WTC11 (cell line): ENCODE measurements at regions of chr9 and their contacts with region 1.

Region 1: DNA sequence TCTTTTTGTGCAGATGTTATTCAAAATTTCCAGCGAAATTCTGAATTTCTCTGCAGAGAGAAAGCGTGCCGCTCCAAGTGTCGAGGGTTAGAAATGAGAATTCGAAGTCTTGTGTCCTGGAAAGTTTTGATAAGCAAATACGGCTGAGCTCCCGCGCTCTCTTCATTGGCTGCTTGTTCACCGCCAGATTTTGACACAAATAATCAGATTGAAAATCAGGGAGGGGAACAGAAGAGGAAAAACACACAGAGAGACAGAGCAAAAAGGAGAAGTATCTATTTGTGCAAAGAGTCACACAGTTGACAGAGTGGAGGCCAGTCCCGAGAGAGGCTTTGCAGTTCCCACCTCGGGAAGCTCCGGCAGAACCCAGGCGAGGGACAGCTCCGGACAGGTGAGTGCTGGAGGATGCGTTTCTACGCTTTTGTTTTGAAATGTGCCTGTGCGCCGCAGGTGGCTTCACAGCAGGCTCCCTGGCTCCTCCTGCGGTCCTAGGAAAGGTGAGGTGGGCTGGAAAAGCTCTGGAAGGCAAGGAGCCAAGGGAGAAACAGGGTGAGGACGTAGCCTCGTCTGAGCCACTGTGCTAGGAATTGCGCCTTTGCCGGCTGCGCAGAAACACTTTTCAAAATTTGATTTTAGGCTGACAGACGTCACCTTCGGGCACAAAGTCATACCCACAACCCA is at the start of gene GFI1B:
- DNase-seq: peak; percentile 57
- ATAC-seq: peak; percentile 48
- H3K4me3 Mint-ChIP-seq: peak within 1 kb of the TSS; percentile 51
- H3K27ac Mint-ChIP-seq: no peak within 1 kb of the TSS
- H3K4me1 Mint-ChIP-seq: peaks cover 19% of the 10 kb centered on the region
- H3K27me3 Mint-ChIP-seq: peaks cover 48% of the 10 kb centered on the region
- CTCF ChIP-seq: no peak
- total RNA-seq, gene GFI1B: 0.41 to 0.78 TPM (median 0.77 TPM) in 3 replicates

Region 2: DNA sequence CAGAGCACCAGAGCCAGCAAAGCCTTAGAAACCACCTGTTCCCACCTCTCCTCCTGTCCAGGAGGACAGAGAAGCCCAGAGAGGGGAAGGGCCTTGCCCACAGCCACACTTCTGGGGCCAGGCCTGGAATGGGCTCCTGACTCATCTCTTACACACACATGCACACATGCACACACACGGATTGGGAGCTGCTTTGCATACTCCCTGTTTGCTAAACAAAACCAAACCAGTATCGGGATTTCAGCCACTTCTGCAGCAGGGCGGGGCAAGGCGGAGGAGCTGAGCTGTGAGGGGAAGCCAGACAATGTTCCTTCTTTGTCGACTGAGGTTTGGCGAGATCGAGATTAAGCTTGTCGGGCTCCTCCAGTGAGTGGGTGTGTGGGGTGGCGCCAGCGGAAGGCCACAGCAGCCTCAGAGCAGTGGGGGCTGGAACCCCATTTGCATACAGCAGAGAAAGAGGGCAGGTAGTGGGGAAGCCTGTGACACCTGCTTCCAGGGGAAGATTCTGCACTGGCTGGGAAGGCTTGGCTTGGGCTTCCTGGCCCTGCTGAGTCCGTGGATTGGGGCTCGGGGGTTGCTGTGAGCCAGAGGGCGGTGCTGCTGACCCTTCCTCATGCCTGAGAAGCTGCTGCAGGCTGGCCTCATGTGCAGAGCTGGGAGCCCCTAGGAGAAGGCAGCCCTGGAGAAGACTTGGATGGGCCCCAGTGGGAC is 16.0 kb after region 1 on chr9:
- CTCF ChIA-PET with region 1: interaction called, 23 read pairs
- POLR2A ChIA-PET with region 1: no interaction called
- DNase-seq: no peak
- ATAC-seq: peak; percentile 31
- H3K4me3 Mint-ChIP-seq: no peak overlapping the region
- H3K27ac Mint-ChIP-seq: no peak overlapping the region
- H3K4me1 Mint-ChIP-seq: peaks cover 37% of the 10 kb centered on the region
- H3K27me3 Mint-ChIP-seq: peaks cover 4% of the 10 kb centered on the region; the same call in 1 of the 2 replicates
- CTCF ChIP-seq: no peak

Region 3: GRCh38 chr9:133004091-133004998 is 25.8 kb after region 1 on chr9:
- CTCF ChIA-PET with region 1: interaction called, 37 read pairs
- POLR2A ChIA-PET with region 1: interaction called, 3 read pairs
- DNase-seq: peak; percentile 6
- ATAC-seq: no peak
- H3K4me3 Mint-ChIP-seq: no peak overlapping the region
- H3K27ac Mint-ChIP-seq: no peak overlapping the region
- H3K4me1 Mint-ChIP-seq: peaks cover 38% of the 10 kb centered on the region
- H3K27me3 Mint-ChIP-seq: peaks cover 92% of the 10 kb centered on the region
- CTCF ChIP-seq: no peak

Region 4: DNA sequence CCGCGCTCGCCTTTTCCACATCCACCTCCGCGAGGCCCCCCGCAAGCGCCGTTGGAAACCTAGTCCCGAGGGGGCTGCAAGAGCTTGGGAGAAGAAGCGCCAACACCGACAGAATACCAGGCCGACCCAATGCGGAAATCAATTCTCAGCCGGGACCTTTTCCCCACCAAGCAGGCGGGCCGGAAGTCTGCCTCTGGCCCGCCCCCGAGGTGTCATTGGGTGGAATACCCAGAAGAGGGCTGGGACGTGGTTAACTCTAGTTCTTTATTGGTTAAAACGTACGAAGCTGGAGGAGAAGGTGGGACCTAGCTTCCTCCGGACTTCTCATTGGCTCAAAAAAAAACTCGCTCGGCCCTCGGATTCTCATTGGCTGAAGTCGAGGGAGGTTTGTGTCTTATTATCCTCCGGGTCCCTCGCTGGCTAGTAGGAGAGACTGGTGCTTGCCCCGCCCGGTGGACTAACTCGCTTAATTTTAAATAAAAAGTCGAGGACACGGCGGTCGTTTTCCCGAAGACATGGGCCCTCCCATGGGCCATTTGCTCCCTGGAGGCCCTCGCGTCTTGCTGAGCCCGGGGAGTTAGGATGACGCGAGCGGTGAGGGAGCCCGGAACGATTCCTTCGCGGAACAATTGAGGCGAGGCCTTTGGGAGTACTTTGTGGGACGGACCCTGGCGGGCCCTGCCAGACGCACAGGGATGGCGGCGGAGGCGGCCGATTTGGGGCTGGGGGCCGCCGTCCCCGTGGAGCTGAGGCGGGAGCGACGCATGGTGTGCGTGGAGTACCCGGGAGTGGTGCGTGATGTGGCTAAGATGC is 51.9 kb after region 1 on chr9 and contains the start of gene GTF3C5:
- CTCF ChIA-PET with region 1: interaction called, 15 read pairs
- POLR2A ChIA-PET with region 1: interaction called, 3 read pairs
- DNase-seq: peak; percentile 90
- ATAC-seq: peak; percentile 98
- H3K4me3 Mint-ChIP-seq: peak within 1 kb of the TSS; percentile 99
- H3K27ac Mint-ChIP-seq: peak within 1 kb of the TSS; percentile 99
- H3K4me1 Mint-ChIP-seq: peaks cover 17% of the 10 kb centered on the region
- H3K27me3 Mint-ChIP-seq: peaks cover 12% of the 10 kb centered on the region
- CTCF ChIP-seq: no peak
- total RNA-seq, gene GTF3C5: 86.6 to 104 TPM (median 87.6 TPM) in 3 replicates

Region 5: GRCh38 chr9:133238851-133239532 is 260.4 kb after region 1 on chr9:
- CTCF ChIA-PET with region 1: no interaction called
- POLR2A ChIA-PET with region 1: no interaction called
- DNase-seq: peak; percentile 93
- ATAC-seq: peak; percentile 69
- H3K4me3 Mint-ChIP-seq: peak overlapping the region; percentile 71
- H3K27ac Mint-ChIP-seq: peak overlapping the region; percentile 93
- H3K4me1 Mint-ChIP-seq: peaks cover 4% of the 10 kb centered on the region
- H3K27me3 Mint-ChIP-seq: peaks cover 36% of the 10 kb centered on the region
- CTCF ChIP-seq: peak; percentile 93